ENCODE measurements at regions of chrX and their contacts with region 1.

Region 1: GRCh38 chrX:81174286-81174685 is 27.4 kb downstream of the HMGN5 start:
- DNase-seq: no peak
- H3K4me3 Mint-ChIP-seq: no peak overlapping the region
- H3K27ac Mint-ChIP-seq: no peak overlapping the region
- H3K4me1 Mint-ChIP-seq: no peaks in the 10 kb centered on the region
- H3K27me3 Mint-ChIP-seq: peaks cover 2% of the 10 kb centered on the region

Region 2: DNA sequence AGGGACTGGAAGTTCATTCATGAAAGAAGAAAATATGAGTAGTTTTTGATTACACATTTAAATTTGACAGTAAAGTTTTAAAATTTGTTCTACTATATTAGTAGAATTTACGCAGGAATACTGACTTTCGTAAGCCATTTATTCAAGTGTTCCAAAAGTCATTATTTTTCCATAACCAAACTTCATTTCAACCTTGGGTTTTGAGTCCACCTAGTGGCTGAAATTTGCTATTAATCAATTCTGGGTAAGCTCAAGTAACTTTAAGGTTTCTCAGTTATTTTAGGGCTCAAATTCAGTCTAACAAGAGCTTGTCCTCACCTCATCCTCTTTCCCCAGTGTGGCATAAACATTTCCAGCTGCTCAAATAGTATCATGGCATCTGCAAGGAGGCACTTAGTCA is 203.0 kb after region 1 on chrX:
- intact Hi-C with region 1: loop called (anchors 1 kb)
- DNase-seq: no peak
- H3K4me3 Mint-ChIP-seq: no peak overlapping the region
- H3K27ac Mint-ChIP-seq: no peak overlapping the region
- H3K4me1 Mint-ChIP-seq: no peaks in the 10 kb centered on the region
- H3K27me3 Mint-ChIP-seq: peaks cover 2% of the 10 kb centered on the region

Region 3: DNA sequence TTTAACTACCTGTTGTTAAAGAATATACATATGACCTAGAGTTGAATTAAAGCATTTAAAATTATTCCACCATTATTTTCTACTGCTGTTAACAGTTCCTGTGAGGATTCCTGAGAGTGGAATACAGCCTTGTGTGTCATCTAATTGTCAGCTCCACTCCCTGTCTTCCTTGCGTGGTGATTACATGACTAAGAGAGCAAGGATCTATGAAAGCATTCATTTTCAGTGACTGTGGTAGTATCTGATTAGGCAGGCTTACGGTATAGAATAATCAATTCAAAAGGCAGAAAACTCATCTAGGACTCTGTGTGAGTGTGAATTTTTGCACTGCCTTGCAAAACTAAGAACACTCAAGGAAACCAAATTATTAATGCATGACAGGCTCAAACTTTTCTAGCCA is 605.4 kb after region 1 on chrX:
- intact Hi-C with region 1: no loop called
- DNase-seq: no peak
- H3K4me3 Mint-ChIP-seq: no peak overlapping the region
- H3K27ac Mint-ChIP-seq: no peak overlapping the region
- H3K4me1 Mint-ChIP-seq: no peaks in the 10 kb centered on the region
- H3K27me3 Mint-ChIP-seq: no peaks in the 10 kb centered on the region

Region 4: DNA sequence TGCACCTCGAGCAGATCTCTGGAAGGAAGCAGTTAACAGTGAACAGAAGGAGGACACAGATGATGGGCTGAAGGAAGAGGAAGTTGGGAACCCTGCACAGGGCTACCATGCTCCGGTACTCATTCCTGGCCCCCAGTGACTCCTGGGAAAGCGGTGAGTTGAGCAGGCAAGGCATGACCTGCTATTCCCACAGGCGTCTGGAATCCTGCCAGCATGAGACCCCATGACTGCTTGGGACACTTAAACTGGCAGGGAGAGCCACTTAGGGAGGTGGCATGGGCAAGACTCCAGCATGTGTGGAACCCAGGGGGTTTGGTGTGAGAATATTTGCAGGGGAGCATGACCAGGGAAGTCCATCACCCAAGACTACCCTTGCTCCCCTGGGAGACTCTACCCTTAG is 1277.4 kb after region 1 on chrX:
- intact Hi-C with region 1: no loop called
- DNase-seq: no peak
- H3K4me3 Mint-ChIP-seq: no peak overlapping the region
- H3K27ac Mint-ChIP-seq: no peak overlapping the region
- H3K4me1 Mint-ChIP-seq: no peaks in the 10 kb centered on the region
- H3K27me3 Mint-ChIP-seq: no peaks in the 10 kb centered on the region

Measured in activated T-helper 1 cell treated with anti-CD3 and anti-CD28 coated beads, Interleukin-12 subunit alpha, Interleukin-12 subunit beta, Interleukin-2, Interleukin-4 antibody, amounts not matched to agents 30 ng/mL and 10 ng/mL and 1 ng/mL, durations not matched to agents 14 hours and 24 hours and 36 hours (primary cell).